Dorsolateral prefrontal cortex (tissue), 120 donors: ENCODE measurements at regions of chr11 and their contacts with region 1.

Region 1: DNA sequence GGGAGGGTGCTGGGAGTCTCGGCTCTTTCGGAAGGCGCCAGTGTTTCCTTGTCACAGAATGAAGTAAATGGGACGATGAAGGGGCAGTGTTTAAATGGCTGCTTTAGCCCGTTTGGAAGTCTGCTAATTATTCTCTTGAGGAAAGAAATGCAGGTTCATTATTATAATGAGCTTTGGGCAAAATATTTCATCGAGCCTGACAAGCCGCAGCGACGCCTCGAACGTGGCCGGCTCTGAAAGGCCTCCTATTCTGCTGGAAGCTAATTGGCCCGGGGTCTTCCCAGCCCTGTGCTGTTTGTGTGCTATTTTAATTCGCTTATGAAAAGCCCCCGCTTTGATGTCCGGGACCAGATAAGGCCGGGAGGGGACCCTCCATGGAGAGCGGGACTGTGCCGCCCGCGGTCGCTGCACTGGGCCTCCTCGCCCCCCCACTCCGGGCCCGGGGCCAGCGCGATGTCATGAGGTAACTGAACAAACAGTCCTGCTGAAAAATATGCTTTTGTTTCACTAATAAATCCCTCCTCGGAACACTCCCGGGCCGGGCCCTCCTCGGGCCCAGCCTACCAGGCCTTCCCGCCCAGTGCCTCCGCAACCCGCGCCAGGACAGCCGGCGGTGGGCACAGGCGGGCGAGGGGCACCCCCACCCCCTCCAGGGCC is 78.4 kb downstream of the CDKN1C start:
- DNase-seq: peak in 9 of 10 donors; percentile 41 to 85 (median 58)
- H3K4me3 ChIP-seq: peak overlapping the region in 25 of 59 donors; percentile 2 to 45 (median 19)
- H3K27ac ChIP-seq: peak overlapping the region in 18 of 59 donors; percentile 2 to 64 (median 37)
- H3K27me3 ChIP-seq: peaks cover 0 to 16% (median 0%) of the 10 kb centered on the region in 45 donors
- CTCF ChIP-seq: peak in 2 of 56 donors; percentile 8 to 13

Region 2: GRCh38 chr11:2699531-2700414 is 107.4 kb before region 1 on chr11 and contains the start of gene KCNQ1OT1:
- intact Hi-C with region 1: loop called in 1 of 2 experiments (anchors 5 kb)
- DNase-seq: peak; percentile 80 to 94 (median 92)
- H3K4me3 ChIP-seq: peak within 1 kb of the TSS; percentile 34 to 80 (median 69)
- H3K27ac ChIP-seq: peak within 1 kb of the TSS in 58 of 59 donors; percentile 43 to 96 (median 92)
- H3K27me3 ChIP-seq: no peaks in the 10 kb centered on the region
- CTCF ChIP-seq: peak in 11 of 56 donors; percentile 6 to 31 (median 22)
- total RNA-seq, gene KCNQ1OT1: 2.4 to 9.8 (median 4.7) TPM

Region 3: DNA sequence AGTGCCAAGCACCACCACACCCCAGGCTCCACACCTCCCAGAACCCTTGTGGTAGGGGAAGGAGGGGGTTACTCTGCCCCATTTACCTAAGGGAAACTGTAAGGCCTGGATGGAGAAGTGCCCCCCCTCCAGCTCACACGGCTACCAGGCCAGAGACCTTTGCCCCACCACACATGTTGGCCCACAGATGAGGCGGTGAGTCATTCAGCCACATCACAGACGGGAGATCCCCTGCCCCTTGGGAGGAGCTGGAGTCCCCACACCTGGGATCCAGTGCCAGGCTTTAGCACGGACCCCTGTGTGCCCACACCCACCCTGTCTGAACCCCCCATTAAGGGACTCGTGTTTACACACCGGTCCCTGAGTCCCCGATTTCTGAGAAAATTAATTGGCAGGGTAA is 53.5 kb after region 1 on chr11:
- intact Hi-C with region 1: loop called in 1 of 2 experiments (anchors 5 kb)
- DNase-seq: no peak
- H3K4me3 ChIP-seq: no peak overlapping the region
- H3K27ac ChIP-seq: no peak overlapping the region
- H3K27me3 ChIP-seq: peaks cover 0 to 22% (median 0%) of the 10 kb centered on the region in 45 donors
- CTCF ChIP-seq: no peak

Region 4: DNA sequence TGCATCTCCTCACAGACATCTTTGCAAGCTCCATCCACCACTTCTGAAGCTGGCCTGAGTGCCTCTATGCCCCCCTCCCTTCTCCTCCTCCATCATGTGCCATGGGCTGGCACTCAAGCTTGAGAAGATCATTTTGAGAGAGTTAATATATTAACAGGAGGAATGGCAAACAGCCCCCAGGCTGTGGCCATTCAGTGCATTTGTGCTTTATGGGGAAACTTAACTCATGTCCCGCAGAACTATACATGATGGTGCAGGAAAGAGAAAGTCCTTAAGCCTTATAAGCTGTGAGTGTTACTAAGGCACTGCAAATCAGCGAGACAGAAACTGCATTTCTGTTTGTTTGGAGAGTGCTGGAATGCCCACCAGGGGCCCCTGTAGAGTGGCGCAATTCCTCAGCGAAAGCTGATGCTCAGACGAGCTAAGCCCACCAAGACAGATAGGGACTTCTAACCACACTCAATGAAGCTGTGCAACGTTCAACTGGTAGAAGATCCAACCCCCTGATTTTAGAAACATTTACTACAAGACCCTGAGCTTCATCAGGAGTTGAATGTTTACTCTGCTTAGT is 148.8 kb after region 1 on chr11:
- intact Hi-C with region 1: no loop called
- DNase-seq: no peak
- H3K4me3 ChIP-seq: no peak overlapping the region
- H3K27ac ChIP-seq: no peak overlapping the region
- H3K27me3 ChIP-seq: no peaks in the 10 kb centered on the region
- CTCF ChIP-seq: no peak